GM12878 (cell line): ENCODE measurements at regions of chr11 and their contacts with region 1.

Region 1: GRCh38 chr11:72075109-72075508 is 5.2 kb downstream of the NUMA1 start:
- DNase-seq: no peak
- ATAC-seq: peak; percentile 28; the same call in 1 of the 3 replicates
- H3K4me3 ChIP-seq: no peak overlapping the region
- H3K27ac ChIP-seq: peak overlapping the region; percentile 48
- H3K4me1 ChIP-seq: peaks cover 15% of the 10 kb centered on the region
- H3K27me3 ChIP-seq: no peaks in the 10 kb centered on the region
- CTCF ChIP-seq: peak; percentile 32 to 59 (median 41)
- EP300 ChIP-seq: no peak
- POLR2A ChIP-seq: no peak
- RAD21 ChIP-seq: peak; percentile 34; the same call in 1 of the 2 replicates

Region 2: DNA sequence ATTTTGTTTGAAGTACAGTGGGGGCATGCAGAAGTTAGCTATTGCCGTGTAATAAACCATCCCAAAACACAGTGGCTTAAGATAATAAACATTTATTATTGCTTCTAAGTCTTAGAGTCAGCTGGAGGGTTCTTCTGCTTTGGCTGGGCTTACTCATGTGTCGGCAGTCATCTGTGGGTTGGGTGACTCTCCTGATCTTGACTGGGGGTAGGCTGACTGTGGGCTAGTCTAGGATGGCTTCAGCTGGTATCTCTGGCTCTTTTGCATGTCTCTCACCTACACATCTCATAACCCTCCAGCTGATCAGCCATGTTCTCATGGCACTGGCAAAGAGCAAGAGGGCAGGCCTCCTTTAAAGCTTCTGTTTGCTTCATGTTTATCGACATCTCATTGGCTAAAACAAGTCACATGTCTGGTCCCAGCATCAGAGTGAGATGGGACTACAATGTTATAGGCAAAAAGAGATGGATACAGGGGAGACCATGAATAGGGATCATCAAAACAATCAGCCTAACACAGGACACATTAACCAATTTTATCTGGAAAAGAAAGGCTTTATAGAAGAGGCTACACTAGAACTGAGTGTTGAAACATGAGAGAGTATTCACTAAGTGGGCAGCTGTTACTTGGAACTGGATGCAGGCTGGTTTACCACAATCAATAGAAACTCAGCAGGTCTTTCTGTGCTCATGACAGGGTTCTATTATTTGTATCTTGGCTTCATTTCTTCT is 10.7 kb after region 1 on chr11:
- CTCF ChIA-PET with region 1: interaction called, 21 read pairs
- POLR2A ChIA-PET with region 1: interaction called, 8 read pairs
- RAD21 ChIA-PET with region 1: interaction called, 5 read pairs
- SMC1A ChIA-PET with region 1: interaction called, 6 read pairs
- in situ Hi-C with region 1: no loop called
- intact Hi-C with region 1: no loop called
- DNase-seq: no peak
- ATAC-seq: no peak
- H3K4me3 ChIP-seq: no peak overlapping the region
- H3K27ac ChIP-seq: no peak overlapping the region
- H3K4me1 ChIP-seq: peaks cover 10% of the 10 kb centered on the region
- H3K27me3 ChIP-seq: no peaks in the 10 kb centered on the region
- CTCF ChIP-seq: no peak
- EP300 ChIP-seq: no peak
- POLR2A ChIP-seq: no peak
- RAD21 ChIP-seq: no peak